ENCODE measurements at regions of chr22 and their contacts with region 1.

Region 1: GRCh38 chr22:39490135-39490798 is 11.8 kb upstream of the MIEF1 start:
- DNase-seq: peak; percentile 86
- H3K4me3 Mint-ChIP-seq: no peak overlapping the region
- H3K27ac Mint-ChIP-seq: no peak overlapping the region
- H3K4me1 Mint-ChIP-seq: peaks cover 8% of the 10 kb centered on the region
- H3K27me3 Mint-ChIP-seq: no peaks in the 10 kb centered on the region

Region 2: GRCh38 chr22:39395936-39396796 is 94.1 kb before region 1 on chr22:
- CTCF ChIA-PET with region 1: interaction called, 12 read pairs
- POLR2A ChIA-PET with region 1: no interaction called
- intact Hi-C with region 1: no loop called
- DNase-seq: no peak
- H3K4me3 Mint-ChIP-seq: no peak overlapping the region
- H3K27ac Mint-ChIP-seq: no peak overlapping the region
- H3K4me1 Mint-ChIP-seq: peaks cover 7% of the 10 kb centered on the region
- H3K27me3 Mint-ChIP-seq: no peaks in the 10 kb centered on the region

Region 3: DNA sequence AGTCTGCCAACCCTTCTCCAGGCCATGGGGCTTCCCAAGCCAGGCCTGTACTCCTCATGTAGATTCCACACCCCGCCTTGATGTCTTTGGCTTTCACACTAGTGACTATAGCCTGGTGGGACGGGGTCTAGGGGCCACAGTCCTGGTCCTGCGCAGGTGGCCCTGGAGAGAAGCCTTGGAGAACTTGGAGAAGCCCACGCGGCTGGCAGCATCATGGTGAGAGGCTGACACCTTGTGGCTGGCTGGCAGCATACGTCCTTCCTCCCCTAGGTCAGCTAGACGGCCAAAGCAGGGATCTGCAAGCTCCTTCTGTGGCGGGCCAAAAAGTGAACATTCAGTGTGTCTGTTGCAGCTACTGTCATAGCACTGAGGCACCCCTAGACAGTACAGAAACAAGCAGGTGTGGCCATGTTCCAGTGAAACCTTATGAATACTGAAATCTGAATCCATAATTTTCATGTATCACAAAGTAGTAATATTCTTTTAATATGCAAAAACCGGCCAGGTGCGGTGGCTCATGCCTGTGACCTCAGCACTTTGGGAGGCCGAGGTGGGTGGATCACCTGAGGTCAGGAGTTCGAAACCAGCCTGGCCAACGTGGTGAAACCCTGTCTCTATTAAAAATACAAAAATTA is 546.4 kb after region 1 on chr22:
- CTCF ChIA-PET with region 1: interaction called, 13 read pairs
- POLR2A ChIA-PET with region 1: no interaction called
- intact Hi-C with region 1: no loop called
- DNase-seq: peak; percentile 76
- H3K4me3 Mint-ChIP-seq: no peak overlapping the region
- H3K27ac Mint-ChIP-seq: no peak overlapping the region
- H3K4me1 Mint-ChIP-seq: no peaks in the 10 kb centered on the region
- H3K27me3 Mint-ChIP-seq: peaks cover 10% of the 10 kb centered on the region

Measured in activated CD4-positive, alpha-beta memory T cell treated with anti-CD3 and anti-CD28 coated beads for 36 hours (primary cell).